ENCODE measurements at regions of chr5 and their contacts with region 1.

Region 1: DNA sequence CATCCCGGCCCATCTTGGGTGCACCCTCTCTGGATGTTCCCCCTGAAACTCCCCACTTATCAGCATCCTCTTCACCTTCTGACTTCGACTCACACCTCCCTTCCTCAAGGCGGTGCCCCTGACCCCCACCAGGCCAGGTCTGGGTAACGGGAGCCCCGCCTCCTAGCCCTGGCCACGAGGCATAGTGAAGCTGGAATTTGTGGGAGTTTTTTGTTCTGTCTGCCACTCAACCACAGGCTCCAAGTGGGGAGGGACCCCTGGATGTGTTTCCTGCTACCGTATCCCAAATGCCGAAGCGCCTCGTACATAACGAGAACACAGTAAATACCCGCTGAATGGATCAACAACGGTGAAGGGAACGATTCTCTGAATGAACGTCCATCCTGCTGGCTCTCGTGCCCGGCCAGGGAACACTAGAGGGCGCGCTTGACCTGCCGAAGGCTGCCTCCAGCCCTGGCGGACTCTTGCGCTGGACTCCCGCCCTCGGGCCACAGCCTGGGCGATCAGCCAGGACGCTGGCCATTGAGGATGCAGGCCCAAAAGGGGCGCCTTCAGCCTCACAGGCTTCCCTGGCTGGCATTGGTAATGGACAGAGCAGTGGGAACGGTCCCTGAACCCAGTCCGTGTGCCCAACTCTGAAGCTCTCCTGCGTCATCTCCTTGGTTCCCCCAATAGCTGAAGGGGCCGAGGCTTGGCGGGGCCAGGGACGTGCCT is 47.3 kb upstream of the PHYKPL start:
- DNase-seq: peak; percentile 54
- ATAC-seq: peak; percentile 47
- H3K4me3 Mint-ChIP-seq: no peak overlapping the region
- H3K27ac Mint-ChIP-seq: no peak overlapping the region
- H3K4me1 Mint-ChIP-seq: peaks cover 4% of the 10 kb centered on the region
- H3K27me3 Mint-ChIP-seq: peaks cover 23% of the 10 kb centered on the region
- CTCF ChIP-seq: no peak

Region 2: GRCh38 chr5:179495906-179496455 is 1216.1 kb after region 1 on chr5:
- CTCF ChIA-PET with region 1: interaction called, 5 read pairs
- POLR2A ChIA-PET with region 1: no interaction called
- intact Hi-C with region 1: loop called (anchors 1 kb)
- DNase-seq: no peak
- ATAC-seq: no peak
- H3K4me3 Mint-ChIP-seq: no peak overlapping the region
- H3K27ac Mint-ChIP-seq: no peak overlapping the region
- H3K4me1 Mint-ChIP-seq: peaks cover 2% of the 10 kb centered on the region
- H3K27me3 Mint-ChIP-seq: peaks cover 2% of the 10 kb centered on the region
- CTCF ChIP-seq: no peak